ENCODE measurements at regions of chr18 and their contacts with region 1.

Region 1: DNA sequence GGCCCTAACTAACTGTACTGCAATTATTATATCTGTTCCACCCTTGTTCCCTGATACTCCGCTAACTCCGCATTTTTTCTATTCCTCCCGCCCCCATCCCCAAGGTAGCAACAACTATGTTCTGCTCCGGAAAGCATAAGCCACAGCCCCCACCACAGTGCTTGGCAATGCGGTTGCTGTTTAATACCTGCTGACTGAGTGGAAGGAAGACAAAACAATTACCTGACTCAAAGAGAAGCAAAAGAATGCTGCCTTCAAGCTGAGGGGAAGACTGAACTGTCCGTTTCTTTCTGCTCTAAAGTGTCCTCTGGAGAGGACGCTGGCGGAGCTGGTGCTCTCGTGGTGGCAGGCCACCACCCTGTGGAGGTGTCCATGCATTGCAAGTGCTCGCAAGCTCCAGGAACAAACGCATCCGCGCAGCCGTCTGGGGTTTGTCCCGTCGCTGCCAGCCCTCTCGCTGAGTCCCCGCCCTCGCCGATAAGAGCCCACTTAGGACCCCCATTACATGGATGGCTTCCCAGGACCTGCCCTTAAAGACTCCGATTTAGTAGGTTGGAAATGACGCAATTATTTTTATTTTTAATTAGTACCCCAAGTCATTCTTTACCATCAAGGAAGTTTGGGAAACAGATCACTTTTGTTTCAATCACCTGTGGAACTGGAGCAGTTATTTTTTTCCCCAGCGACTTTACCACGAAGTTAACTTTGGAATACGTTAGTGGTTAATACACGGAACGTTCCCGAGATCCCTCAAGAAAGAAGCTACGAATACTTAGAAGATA is 1.6 kb upstream of the MYL12A start:
- DNase-seq: peak; percentile 88 to 90
- ATAC-seq: peak; percentile 60 to 85 (median 76)
- H3K4me3 ChIP-seq: peak overlapping the region; percentile 27 to 95 (median 90)
- H3K27ac ChIP-seq: peak overlapping the region; percentile 98 to 100 (median 99)
- H3K4me1 ChIP-seq: peaks cover 0 to 54% (median 37%) of the 10 kb centered on the region in 9 donors
- H3K27me3 ChIP-seq: no peaks in the 10 kb centered on the region
- CTCF ChIP-seq: peak; percentile 90 to 98 (median 96)

Region 2: DNA sequence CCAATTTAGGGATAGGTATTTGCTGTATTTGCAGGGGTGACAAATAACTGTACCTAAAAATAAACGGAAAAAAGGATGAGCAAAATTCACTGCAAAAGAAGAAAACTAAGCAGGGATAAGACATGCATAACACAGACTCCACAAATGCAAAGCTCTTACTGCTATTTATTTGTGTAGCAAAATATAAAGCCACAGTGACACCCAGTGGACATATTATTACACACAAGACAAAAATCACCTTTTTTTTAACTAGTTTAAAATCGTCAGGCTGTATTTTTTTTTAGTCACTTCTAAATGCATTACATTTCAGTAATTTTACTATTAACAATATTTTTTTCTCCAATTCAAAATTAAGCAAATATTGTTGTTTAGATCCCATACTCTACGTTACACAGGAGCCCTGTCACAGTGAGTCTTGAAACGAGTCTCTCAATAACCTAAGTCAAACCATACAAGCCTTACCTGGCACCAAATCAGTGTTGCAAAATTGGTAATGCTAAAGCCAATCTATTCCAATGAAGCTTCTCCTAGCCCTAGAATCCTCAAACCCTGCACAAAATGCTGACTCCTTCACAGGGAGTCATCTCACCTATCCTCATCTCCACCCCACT is 698.5 kb before region 1 on chr18:
- intact Hi-C with region 1: no loop called
- DNase-seq: no peak
- ATAC-seq: peak in 2 of 8 donors; percentile 42 to 55
- H3K4me3 ChIP-seq: no peak overlapping the region
- H3K27ac ChIP-seq: no peak overlapping the region
- H3K4me1 ChIP-seq: no peaks in the 10 kb centered on the region
- H3K27me3 ChIP-seq: no peaks in the 10 kb centered on the region
- CTCF ChIP-seq: peak; percentile 36 to 72 (median 61)

Region 3: DNA sequence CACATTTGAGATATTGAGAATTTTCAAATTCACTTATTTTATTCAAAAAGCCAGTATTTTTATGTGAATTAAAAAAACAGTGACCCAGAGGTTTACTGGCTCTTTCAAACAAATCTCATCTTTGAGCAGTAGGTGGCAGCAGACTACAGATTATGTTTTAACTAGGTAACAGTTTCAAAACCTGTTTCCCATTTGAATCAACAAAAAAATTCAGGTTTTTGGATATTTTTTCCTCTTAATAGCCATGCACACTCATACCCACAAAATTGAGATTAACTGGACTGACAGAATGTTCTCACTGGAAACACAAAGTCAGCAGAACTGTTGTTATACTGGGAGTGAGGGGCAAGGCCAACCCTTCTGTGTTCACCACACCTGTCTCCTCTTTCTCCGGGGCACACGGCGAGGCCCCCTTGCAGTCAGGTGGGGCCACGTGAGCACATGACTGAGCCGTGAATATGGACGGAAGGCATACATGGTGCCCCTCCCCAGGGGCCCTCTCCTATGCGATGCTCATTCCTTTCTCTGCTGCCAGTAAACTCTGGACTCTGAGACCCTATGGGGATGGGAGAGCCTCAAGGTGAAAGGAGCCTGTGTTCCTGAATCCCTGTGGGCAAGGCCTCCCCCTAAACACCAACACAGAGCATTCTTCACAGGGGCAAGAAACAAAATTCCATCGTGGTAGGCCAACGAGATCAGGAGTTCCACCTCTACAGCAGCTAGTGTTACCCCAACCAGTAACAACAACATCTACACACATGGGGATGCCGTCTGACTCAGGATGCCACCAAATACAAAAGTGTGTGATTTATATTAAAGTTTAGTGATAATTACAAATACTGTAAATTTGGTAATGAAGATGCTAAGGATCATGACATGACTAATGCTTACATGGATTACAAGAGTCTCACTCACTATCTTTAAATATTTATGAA is 313.5 kb before region 1 on chr18:
- intact Hi-C with region 1: loop called (anchors 2 to 10 kb)
- DNase-seq: peak in 1 of 2 donors; percentile 66
- ATAC-seq: peak in 5 of 8 donors; percentile 34 to 62 (median 56)
- H3K4me3 ChIP-seq: no peak overlapping the region
- H3K27ac ChIP-seq: no peak overlapping the region
- H3K4me1 ChIP-seq: peaks cover 0 to 4% (median 0%) of the 10 kb centered on the region in 9 donors
- H3K27me3 ChIP-seq: no peaks in the 10 kb centered on the region
- CTCF ChIP-seq: peak; percentile 60 to 87 (median 77)

Region 4: GRCh38 chr18:3062798-3063680 is 183.0 kb before region 1 on chr18:
- intact Hi-C with region 1: loop called in 1 of 10 experiments (anchors 1 kb)
- DNase-seq: peak; percentile 61 to 76
- ATAC-seq: peak; percentile 56 to 76 (median 68)
- H3K4me3 ChIP-seq: peak overlapping the region in 2 of 10 donors; percentile 22
- H3K27ac ChIP-seq: peak overlapping the region in 1 of 10 donors; percentile 87
- H3K4me1 ChIP-seq: peaks cover 0 to 52% (median 12%) of the 10 kb centered on the region in 9 donors
- H3K27me3 ChIP-seq: no peaks in the 10 kb centered on the region
- CTCF ChIP-seq: peak; percentile 47 to 87 (median 79)

Region 5: DNA sequence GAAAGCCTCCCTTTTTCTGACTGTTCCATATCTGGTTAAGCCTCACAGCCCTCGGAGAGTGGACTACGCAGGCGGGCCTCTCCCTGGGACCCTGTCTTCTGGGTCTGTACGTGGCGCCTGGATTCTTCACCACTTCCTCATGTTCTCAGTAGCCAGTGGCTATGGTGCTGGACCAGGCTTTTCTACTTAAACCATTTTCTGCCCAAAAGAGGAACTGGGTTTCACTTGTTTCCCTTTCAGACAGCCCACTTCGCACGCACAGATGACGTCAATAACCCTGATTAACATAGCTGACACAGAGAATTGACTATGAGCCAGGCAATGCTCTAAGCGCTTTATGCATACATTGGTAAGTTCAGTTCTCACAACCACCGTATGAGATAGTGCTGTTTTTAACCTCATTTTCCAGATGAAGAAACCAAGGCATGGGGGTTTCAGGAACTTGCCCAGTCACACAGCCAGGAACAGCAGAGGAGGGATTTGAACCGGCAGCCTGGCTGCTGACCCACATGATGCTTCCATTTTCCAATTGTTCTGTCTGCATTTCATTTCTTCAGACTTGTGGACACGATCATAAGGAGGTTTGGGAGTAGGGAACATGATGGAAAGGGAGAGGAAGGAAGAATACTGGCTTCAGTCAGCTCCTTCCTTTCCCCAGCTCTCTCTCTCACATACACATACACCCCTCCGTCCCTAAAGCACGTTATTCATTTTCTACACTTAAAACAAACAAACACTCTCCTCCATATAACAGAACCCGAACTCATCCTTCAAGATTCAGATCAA is 67.9 kb before region 1 on chr18:
- intact Hi-C with region 1: loop called in 4 of 10 experiments (anchors 5 to 10 kb)
- DNase-seq: peak; percentile 23 to 60
- ATAC-seq: peak; percentile 25 to 76 (median 54)
- H3K4me3 ChIP-seq: no peak overlapping the region
- H3K27ac ChIP-seq: peak overlapping the region in 8 of 10 donors; percentile 19 to 85 (median 53)
- H3K4me1 ChIP-seq: peaks cover 0 to 53% (median 21%) of the 10 kb centered on the region in 9 donors
- H3K27me3 ChIP-seq: no peaks in the 10 kb centered on the region
- CTCF ChIP-seq: no peak

Region 6: GRCh38 chr18:3194947-3195612 is 51.0 kb before region 1 on chr18:
- intact Hi-C with region 1: loop called in 2 of 10 experiments (anchors 5 to 10 kb)
- DNase-seq: no peak
- ATAC-seq: peak in 7 of 8 donors; percentile 19 to 84 (median 64)
- H3K4me3 ChIP-seq: peak overlapping the region in 1 of 10 donors; percentile 4
- H3K27ac ChIP-seq: peak overlapping the region in 9 of 10 donors; percentile 36 to 72 (median 62)
- H3K4me1 ChIP-seq: peaks cover 0 to 78% (median 29%) of the 10 kb centered on the region in 9 donors
- H3K27me3 ChIP-seq: no peaks in the 10 kb centered on the region
- CTCF ChIP-seq: no peak

Region 7: DNA sequence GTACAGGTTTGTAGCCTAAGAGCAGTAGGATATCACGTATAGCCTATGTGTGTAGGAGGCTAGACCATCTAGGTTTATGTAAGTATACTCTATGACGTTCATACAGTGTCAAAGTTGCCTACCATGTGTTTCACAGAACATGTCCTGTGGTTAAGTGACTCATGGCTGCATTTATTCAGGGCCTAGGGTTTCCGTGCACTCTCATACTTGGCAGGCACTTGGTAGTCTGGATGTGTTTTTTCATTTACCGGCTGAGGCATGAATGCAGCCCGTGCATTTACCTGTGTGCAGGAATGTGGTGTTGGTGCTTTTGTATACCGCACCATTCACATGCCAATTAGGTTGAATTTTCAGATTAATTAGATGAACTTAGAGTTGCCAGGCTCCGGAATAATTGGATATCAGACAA is 59.3 kb after region 1 on chr18:
- intact Hi-C with region 1: no loop called
- DNase-seq: no peak
- ATAC-seq: peak in 1 of 8 donors; percentile 22
- H3K4me3 ChIP-seq: no peak overlapping the region
- H3K27ac ChIP-seq: no peak overlapping the region
- H3K4me1 ChIP-seq: no peaks in the 10 kb centered on the region
- H3K27me3 ChIP-seq: peaks cover 0 to 9% (median under 1%) of the 10 kb centered on the region in 7 donors
- CTCF ChIP-seq: no peak

Region 8: GRCh38 chr18:3350566-3351527 is 104.8 kb after region 1 on chr18:
- intact Hi-C with region 1: no loop called
- DNase-seq: no peak
- ATAC-seq: no peak
- H3K4me3 ChIP-seq: no peak overlapping the region
- H3K27ac ChIP-seq: no peak overlapping the region
- H3K4me1 ChIP-seq: no peaks in the 10 kb centered on the region
- H3K27me3 ChIP-seq: peaks cover 0 to 5% (median 0%) of the 10 kb centered on the region in 7 donors
- CTCF ChIP-seq: no peak

Measured in heart right ventricle (tissue), 16 donors.